ENCODE measurements at regions of chr7 and their contacts with region 1.

Region 1: DNA sequence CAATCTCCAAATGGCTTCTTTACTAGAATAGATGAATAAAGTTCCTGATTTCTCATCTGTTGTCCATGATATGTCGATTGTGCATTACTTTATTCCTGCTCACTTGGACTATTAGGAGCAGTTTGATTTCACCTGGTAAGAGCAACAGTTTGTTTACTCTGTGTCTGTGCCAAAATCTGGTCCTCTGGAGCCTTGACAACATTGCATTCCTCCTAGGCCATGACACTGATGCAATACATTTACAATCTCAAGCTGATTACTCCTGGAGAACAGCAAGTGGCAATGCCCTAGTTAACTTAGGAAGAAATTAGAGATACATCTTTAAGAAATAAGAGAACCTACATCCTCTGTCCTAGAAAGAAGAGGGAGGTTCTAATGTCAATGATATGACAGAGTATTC is 71.8 kb downstream of the SGCE start:
- DNase-seq: no peak
- ATAC-seq: no peak
- H3K4me3 Mint-ChIP-seq: no peak overlapping the region
- H3K27ac Mint-ChIP-seq: no peak overlapping the region
- H3K4me1 Mint-ChIP-seq: no peaks in the 10 kb centered on the region
- H3K27me3 Mint-ChIP-seq: no peaks in the 10 kb centered on the region
- CTCF ChIP-seq: no peak

Region 2: DNA sequence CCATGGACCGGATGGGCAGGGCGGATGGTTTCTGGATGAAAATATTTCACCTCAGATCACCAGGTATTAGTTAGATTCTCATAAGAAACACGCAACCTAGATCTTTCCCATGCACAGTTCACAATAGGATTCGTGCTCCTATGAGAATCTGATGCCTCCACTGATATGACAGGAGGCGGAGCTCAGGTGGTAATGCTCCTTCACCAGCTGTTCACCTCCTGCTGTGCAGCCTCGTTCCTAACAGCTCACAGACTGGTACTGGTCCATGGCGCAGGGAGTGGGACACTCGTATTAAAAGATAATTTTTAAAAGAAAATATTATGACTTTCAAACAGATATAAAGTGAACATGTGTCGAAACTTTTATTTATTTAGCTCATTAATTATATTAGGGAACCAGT is 81.0 kb before region 1 on chr7:
- CTCF ChIA-PET with region 1: no interaction called
- POLR2A ChIA-PET with region 1: no interaction called
- intact Hi-C with region 1: no loop called
- DNase-seq: no peak
- ATAC-seq: no peak
- H3K4me3 Mint-ChIP-seq: no peak overlapping the region
- H3K27ac Mint-ChIP-seq: no peak overlapping the region
- H3K4me1 Mint-ChIP-seq: no peaks in the 10 kb centered on the region
- H3K27me3 Mint-ChIP-seq: peaks cover 14% of the 10 kb centered on the region
- CTCF ChIP-seq: no peak

Region 3: GRCh38 chr7:94600267-94600666 is 16.2 kb after region 1 on chr7:
- CTCF ChIA-PET with region 1: no interaction called
- POLR2A ChIA-PET with region 1: no interaction called
- intact Hi-C with region 1: loop called (anchors 2 kb)
- DNase-seq: no peak
- ATAC-seq: no peak
- H3K4me3 Mint-ChIP-seq: no peak overlapping the region
- H3K27ac Mint-ChIP-seq: no peak overlapping the region
- H3K4me1 Mint-ChIP-seq: no peaks in the 10 kb centered on the region
- H3K27me3 Mint-ChIP-seq: no peaks in the 10 kb centered on the region
- CTCF ChIP-seq: no peak

Region 4: GRCh38 chr7:94666879-94667587 is 82.9 kb after region 1 on chr7:
- CTCF ChIA-PET with region 1: no interaction called
- POLR2A ChIA-PET with region 1: no interaction called
- intact Hi-C with region 1: no loop called
- DNase-seq: no peak
- ATAC-seq: no peak
- H3K4me3 Mint-ChIP-seq: no peak overlapping the region
- H3K27ac Mint-ChIP-seq: no peak overlapping the region
- H3K4me1 Mint-ChIP-seq: no peaks in the 10 kb centered on the region
- H3K27me3 Mint-ChIP-seq: peaks cover 11% of the 10 kb centered on the region
- CTCF ChIP-seq: no peak

Measured in activated B cell treated with CpG ODN at 0.5 μM for 24 hours (primary cell).